CD8-positive, alpha-beta T cell (primary cell): ENCODE measurements at regions of chr5 and their contacts with region 1.

Region 1: GRCh38 chr5:36908544-36909260 is 32.1 kb downstream of the NIPBL start:
- DNase-seq: no peak
- ATAC-seq: no peak
- H3K4me3 ChIP-seq: no peak overlapping the region
- H3K4me3 Mint-ChIP-seq: no peak overlapping the region
- H3K27ac ChIP-seq: no peak overlapping the region
- H3K27ac Mint-ChIP-seq: no peak overlapping the region
- H3K4me1 ChIP-seq: peaks cover 52% of the 10 kb centered on the region
- H3K4me1 Mint-ChIP-seq: peaks cover 56% of the 10 kb centered on the region
- H3K27me3 ChIP-seq: no peaks in the 10 kb centered on the region
- H3K27me3 Mint-ChIP-seq: no peaks in the 10 kb centered on the region
- CTCF ChIP-seq: no peak

Region 2: DNA sequence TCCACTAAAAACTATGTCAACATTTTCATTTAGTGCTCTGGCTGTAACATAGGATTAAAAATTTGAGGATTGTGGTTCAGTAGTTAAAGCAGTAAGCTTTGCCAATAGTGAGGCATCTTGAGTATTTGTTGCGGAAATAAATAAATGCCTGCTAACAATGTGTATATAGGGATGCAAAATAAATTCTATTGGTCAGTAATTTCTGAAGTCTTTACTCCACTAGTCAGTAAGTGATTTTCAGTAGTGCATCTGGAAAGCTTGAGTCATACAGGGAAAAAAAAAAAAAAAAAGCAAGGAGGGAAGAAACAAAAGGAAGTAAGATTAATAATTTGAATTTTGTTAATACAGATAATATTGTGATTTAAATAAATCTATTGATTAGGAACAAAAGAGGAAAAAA is 11.1 kb before region 1 on chr5:
- CTCF ChIA-PET with region 1: no interaction called
- POLR2A ChIA-PET with region 1: no interaction called
- intact Hi-C with region 1: loop called in 1 of 2 experiments (anchors 2 kb)
- DNase-seq: no peak
- ATAC-seq: no peak
- H3K4me3 ChIP-seq: no peak overlapping the region
- H3K4me3 Mint-ChIP-seq: no peak overlapping the region
- H3K27ac ChIP-seq: no peak overlapping the region
- H3K27ac Mint-ChIP-seq: no peak overlapping the region
- H3K4me1 ChIP-seq: peaks cover 15% of the 10 kb centered on the region
- H3K4me1 Mint-ChIP-seq: peaks cover 72% of the 10 kb centered on the region
- H3K27me3 ChIP-seq: no peaks in the 10 kb centered on the region
- H3K27me3 Mint-ChIP-seq: no peaks in the 10 kb centered on the region
- CTCF ChIP-seq: no peak

Region 3: DNA sequence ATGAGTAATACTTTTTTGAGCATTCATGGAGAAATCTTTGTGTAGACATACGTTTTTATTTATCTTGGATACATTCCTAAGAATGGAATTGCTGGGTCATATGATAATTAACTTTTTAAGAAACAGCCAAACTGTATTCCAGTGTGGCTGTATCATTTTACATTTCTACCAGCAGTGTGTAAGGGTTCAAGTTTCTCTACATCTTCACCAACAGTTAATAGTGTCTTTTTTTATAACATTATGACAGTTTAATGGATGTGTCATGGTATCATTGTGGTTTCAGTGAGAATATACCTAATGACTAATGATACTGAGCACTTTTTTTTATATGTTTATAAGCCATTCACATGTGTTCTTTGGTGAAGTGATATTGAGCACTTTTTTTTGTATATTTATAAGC is 20.2 kb after region 1 on chr5:
- CTCF ChIA-PET with region 1: no interaction called
- POLR2A ChIA-PET with region 1: interaction called, 3 read pairs
- intact Hi-C with region 1: loop called in 1 of 2 experiments (anchors 2 kb)
- DNase-seq: peak in 2 of 9 experiments; percentile 6 to 18
- ATAC-seq: no peak
- H3K4me3 ChIP-seq: no peak overlapping the region
- H3K4me3 Mint-ChIP-seq: no peak overlapping the region
- H3K27ac ChIP-seq: no peak overlapping the region
- H3K27ac Mint-ChIP-seq: no peak overlapping the region
- H3K4me1 ChIP-seq: peaks cover 18% of the 10 kb centered on the region
- H3K4me1 Mint-ChIP-seq: peaks cover 73% of the 10 kb centered on the region
- H3K27me3 ChIP-seq: no peaks in the 10 kb centered on the region
- H3K27me3 Mint-ChIP-seq: no peaks in the 10 kb centered on the region
- CTCF ChIP-seq: no peak